ENCODE measurements at regions of chr6 and their contacts with region 1.

Region 1: DNA sequence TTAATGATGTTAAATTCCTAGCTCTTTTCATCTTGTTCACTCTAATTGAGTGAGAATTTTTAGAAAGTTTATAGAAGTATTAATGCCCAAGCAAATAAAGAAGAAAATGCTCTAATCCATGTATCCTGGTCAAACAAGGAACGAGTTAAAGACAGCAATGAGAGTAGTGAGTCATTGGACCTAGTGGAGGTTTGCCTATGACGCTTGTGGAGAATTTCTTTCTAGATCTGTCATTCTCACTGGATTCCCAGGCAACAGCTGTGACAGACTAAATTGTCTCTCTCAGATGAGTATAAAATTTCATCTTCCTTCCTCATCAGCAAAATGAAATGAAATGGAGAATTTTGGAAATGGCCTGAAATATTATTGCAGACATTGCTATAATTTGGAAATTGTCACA is 127.9 kb downstream of the COL19A1 start:
- DNase-seq: no peak
- H3K4me3 ChIP-seq: no peak overlapping the region
- H3K4me3 Mint-ChIP-seq: no peak overlapping the region
- H3K27ac ChIP-seq: no peak overlapping the region
- H3K27ac Mint-ChIP-seq: no peak overlapping the region
- H3K4me1 ChIP-seq: no peaks in the 10 kb centered on the region
- H3K4me1 Mint-ChIP-seq: no peaks in the 10 kb centered on the region
- H3K27me3 ChIP-seq: no peaks in the 10 kb centered on the region
- H3K27me3 Mint-ChIP-seq: peaks cover 0 to 1% (median 0%) of the 10 kb centered on the region in 3 donors
- CTCF ChIP-seq: no peak

Region 2: GRCh38 chr6:68273297-68273696 is 1721.0 kb before region 1 on chr6:
- intact Hi-C with region 1: no loop called
- DNase-seq: no peak
- H3K4me3 ChIP-seq: no peak overlapping the region
- H3K4me3 Mint-ChIP-seq: no peak overlapping the region
- H3K27ac ChIP-seq: no peak overlapping the region
- H3K27ac Mint-ChIP-seq: peak overlapping the region in 1 of 7 donors; percentile 36
- H3K4me1 ChIP-seq: no peaks in the 10 kb centered on the region
- H3K4me1 Mint-ChIP-seq: no peaks in the 10 kb centered on the region
- H3K27me3 ChIP-seq: no peaks in the 10 kb centered on the region
- H3K27me3 Mint-ChIP-seq: no peaks in the 10 kb centered on the region
- CTCF ChIP-seq: no peak

Region 3: GRCh38 chr6:70028926-70029325 is 34.7 kb after region 1 on chr6:
- intact Hi-C with region 1: loop called in 1 of 2 experiments (anchors 2 kb)
- DNase-seq: no peak
- H3K4me3 ChIP-seq: no peak overlapping the region
- H3K4me3 Mint-ChIP-seq: no peak overlapping the region
- H3K27ac ChIP-seq: no peak overlapping the region
- H3K27ac Mint-ChIP-seq: no peak overlapping the region
- H3K4me1 ChIP-seq: no peaks in the 10 kb centered on the region
- H3K4me1 Mint-ChIP-seq: no peaks in the 10 kb centered on the region
- H3K27me3 ChIP-seq: no peaks in the 10 kb centered on the region
- H3K27me3 Mint-ChIP-seq: no peaks in the 10 kb centered on the region
- CTCF ChIP-seq: no peak

Measured in CD14-positive monocyte (primary cell).